Sciatic nerve (tissue), 2 donors: ENCODE measurements at regions of chr1 and their contacts with region 1.

Region 1: GRCh38 chr1:208874915-208875314 is 630.7 kb upstream of the PLXNA2 start:
- DNase-seq: no peak
- ATAC-seq: no peak

Region 2: GRCh38 chr1:206962272-206962671 is 1912.6 kb before region 1 on chr1:
- intact Hi-C with region 1: loop called (anchors 5 kb)
- DNase-seq: no peak
- ATAC-seq: peak; percentile 13

Region 3: DNA sequence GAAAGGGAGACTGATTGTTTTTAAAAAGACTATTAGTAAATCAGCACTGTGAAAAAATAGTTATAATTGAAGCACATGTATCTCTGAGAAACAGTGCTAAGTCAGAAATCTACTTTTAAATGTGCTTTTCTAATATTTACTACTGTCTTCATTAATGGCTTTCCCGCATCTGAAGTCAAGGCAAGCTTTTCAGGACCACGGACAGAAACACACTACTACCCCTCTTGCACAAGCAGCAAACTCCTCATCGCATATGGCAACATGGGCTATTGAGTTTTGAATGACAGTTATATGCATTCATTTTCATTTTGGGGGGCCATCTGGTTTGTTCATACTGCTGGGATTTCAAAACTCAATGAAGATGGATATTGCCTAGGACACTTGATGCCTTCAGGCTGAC is 275.2 kb after region 1 on chr1:
- intact Hi-C with region 1: no loop called
- DNase-seq: no peak
- ATAC-seq: no peak